Activated naive CD4-positive, alpha-beta T cell treated with anti-CD3 and anti-CD28 coated beads for 36 hours (primary cell): ENCODE measurements at regions of chr19 and their contacts with region 1.

Region 1: GRCh38 chr19:531009-531752 is 379 bp upstream of the CDC34 start:
- DNase-seq: peak; percentile 82
- H3K4me3 Mint-ChIP-seq: peak overlapping the region; percentile 77
- H3K27ac Mint-ChIP-seq: peak overlapping the region; percentile 77
- H3K4me1 Mint-ChIP-seq: peaks cover 26% of the 10 kb centered on the region
- H3K27me3 Mint-ChIP-seq: peaks cover 3% of the 10 kb centered on the region

Region 2: DNA sequence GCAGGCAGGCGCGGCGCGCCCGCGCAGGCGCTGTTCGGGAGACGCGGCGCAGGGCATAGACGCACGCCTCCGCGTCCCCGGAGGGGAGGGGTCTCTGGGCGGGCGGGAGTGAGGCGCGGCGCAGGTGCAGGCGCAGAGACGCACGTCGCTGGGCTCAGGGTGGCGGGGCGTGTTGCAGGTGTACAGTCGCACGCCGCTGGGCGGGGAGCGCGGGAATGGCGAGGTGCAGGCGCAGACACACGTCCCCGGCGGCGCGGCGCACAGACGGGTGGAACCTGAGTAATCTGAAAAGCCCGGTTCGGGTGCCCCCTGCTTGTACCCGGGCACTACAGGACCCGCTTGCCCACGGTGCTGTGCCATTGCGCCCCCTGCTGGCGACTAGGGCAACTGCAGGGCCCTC is 284.6 kb before region 1 on chr19:
- CTCF ChIA-PET with region 1: no interaction called
- intact Hi-C with region 1: no loop called
- DNase-seq: no peak
- H3K4me3 Mint-ChIP-seq: no peak overlapping the region
- H3K27ac Mint-ChIP-seq: no peak overlapping the region
- H3K4me1 Mint-ChIP-seq: no peaks in the 10 kb centered on the region
- H3K27me3 Mint-ChIP-seq: peaks cover 1% of the 10 kb centered on the region

Region 3: DNA sequence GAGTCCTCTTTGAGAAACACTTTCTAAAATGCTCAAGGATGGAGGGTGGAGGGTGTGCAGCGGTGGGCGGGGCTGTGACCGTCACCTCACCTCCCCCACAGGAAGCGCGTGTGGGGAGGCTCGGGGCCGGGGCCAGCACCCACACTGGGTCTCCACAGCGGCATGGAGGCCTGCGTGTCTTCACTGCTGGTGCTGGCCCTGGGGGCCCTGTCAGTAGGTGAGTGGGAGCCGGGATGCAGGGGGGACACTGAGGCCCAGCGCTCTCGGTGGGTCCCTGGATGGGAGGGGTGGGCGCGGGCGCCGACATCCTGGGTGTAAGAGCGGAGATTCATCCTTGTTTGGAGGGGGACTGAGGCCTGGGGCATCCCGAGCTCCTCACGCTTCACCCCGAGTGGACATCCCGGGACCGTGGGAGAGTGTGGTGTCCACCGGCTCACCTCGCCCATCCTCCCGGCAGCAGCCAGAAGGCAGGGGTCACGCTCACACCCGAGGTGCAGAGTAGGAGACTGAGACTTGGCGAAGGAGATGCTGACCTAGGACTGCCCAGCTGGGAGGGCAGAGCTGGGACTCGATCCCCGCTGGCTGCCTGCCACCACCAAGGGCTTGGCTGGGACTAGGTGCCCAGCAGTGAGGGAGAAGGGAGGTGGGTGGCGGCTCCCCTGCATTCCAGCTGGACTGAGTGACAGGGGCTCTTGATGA is 12.9 kb after region 1 on chr19 and contains the start of gene GZMM:
- CTCF ChIA-PET with region 1: interaction called, 3 read pairs
- intact Hi-C with region 1: loop called (anchors 1 kb)
- DNase-seq: peak; percentile 83
- H3K4me3 Mint-ChIP-seq: peak within 1 kb of the TSS; percentile 78
- H3K27ac Mint-ChIP-seq: peak within 1 kb of the TSS; percentile 81
- H3K4me1 Mint-ChIP-seq: peaks cover 23% of the 10 kb centered on the region
- H3K27me3 Mint-ChIP-seq: no peaks in the 10 kb centered on the region
- total RNA-seq, gene GZMM: 20.7 TPM

Region 4: GRCh38 chr19:633068-633785 is 102.0 kb after region 1 on chr19 and contains the start of gene POLRMT:
- CTCF ChIA-PET with region 1: no interaction called
- intact Hi-C with region 1: loop called (anchors 1 kb)
- DNase-seq: peak; percentile 98
- H3K4me3 Mint-ChIP-seq: peak within 1 kb of the TSS; percentile 93
- H3K27ac Mint-ChIP-seq: peak within 1 kb of the TSS; percentile 78
- H3K4me1 Mint-ChIP-seq: peaks cover 37% of the 10 kb centered on the region
- H3K27me3 Mint-ChIP-seq: no peaks in the 10 kb centered on the region
- total RNA-seq, gene POLRMT: 63.8 to 65.6 TPM